Activated naive CD4-positive, alpha-beta T cell treated with anti-CD3 and anti-CD28 coated beads for 36 hours (primary cell): ENCODE measurements at regions of chr4 and their contacts with region 1.

Region 1: DNA sequence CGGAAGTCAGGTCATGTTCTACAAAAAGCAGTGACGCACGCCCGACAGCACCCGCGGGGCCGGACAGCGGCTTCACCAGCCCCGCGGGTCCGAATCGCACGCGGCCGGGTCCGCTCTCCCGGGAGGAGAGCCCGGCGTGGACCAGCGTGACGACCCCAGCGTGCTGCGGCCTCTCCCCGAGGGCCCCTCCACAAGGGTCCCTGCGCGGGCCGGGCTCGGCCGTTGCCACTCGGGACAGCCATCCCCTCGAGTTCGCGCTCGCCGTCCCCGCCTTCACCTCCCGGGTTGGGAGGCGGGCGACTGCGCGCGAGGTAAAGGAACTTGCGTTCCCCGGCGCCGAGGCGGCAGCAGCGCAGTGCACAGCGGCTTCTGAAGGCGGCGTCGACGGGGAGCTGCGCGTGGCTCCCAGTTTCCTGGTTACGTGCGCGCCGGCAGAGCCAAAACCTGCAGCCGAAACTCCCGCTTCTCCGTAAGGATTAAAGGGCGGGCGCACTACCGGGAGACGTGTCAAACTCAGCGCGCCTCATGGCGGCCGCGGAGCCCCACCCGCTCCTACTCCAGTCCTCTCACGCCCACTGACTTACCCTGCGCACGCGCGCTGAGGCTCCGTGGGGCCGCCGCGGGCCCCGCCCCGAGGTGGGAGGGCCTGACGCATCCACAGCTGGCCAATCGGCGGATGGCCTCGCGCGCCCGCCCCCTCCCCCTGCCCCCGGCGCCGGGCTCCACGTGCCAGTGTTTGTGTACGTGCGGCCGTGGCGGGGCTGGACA is 416 bp upstream of the LRP2BP start:
- DNase-seq: peak; percentile 95
- H3K4me3 Mint-ChIP-seq: peak overlapping the region; percentile 93
- H3K27ac Mint-ChIP-seq: peak overlapping the region; percentile 98
- H3K4me1 Mint-ChIP-seq: peaks cover 42% of the 10 kb centered on the region
- H3K27me3 Mint-ChIP-seq: no peaks in the 10 kb centered on the region

Region 2: GRCh38 chr4:183504064-183504929 is 1891.8 kb before region 1 on chr4:
- CTCF ChIA-PET with region 1: no interaction called
- intact Hi-C with region 1: loop called (anchors 10 kb)
- DNase-seq: peak; percentile 98
- H3K4me3 Mint-ChIP-seq: peak overlapping the region; percentile 91
- H3K27ac Mint-ChIP-seq: peak overlapping the region; percentile 93
- H3K4me1 Mint-ChIP-seq: peaks cover 39% of the 10 kb centered on the region
- H3K27me3 Mint-ChIP-seq: no peaks in the 10 kb centered on the region

Region 3: DNA sequence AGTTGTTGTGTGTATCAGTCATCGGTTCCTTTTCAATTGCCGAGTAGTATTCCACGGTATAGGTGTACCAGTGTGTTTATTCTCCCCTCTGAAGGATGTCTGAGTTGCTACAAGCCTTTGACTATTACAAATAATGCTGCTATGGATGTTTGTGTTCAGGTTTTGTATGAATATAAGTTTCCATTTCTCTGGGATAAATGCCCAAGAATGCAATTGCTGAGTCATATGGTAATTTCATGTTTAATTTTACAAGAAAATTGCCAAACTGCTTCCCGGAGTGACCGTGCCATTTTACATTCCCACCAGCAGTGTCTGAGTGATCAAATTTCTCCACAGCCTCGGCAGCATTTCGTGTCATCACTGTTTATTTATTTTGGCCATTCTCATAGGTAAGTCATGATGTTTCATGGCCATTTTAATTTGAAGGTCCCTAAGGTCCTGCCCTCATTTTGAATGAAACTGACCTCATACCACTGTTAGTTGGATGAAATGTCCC is 995.7 kb before region 1 on chr4:
- CTCF ChIA-PET with region 1: no interaction called
- intact Hi-C with region 1: no loop called
- DNase-seq: no peak
- H3K4me3 Mint-ChIP-seq: no peak overlapping the region
- H3K27ac Mint-ChIP-seq: no peak overlapping the region
- H3K4me1 Mint-ChIP-seq: peaks cover 20% of the 10 kb centered on the region
- H3K27me3 Mint-ChIP-seq: no peaks in the 10 kb centered on the region

Region 4: GRCh38 chr4:184733654-184734524 is 662.3 kb before region 1 on chr4 and contains the start of gene CENPU:
- CTCF ChIA-PET with region 1: no interaction called
- intact Hi-C with region 1: loop called (anchors 2 kb)
- DNase-seq: peak; percentile 97
- H3K4me3 Mint-ChIP-seq: peak within 1 kb of the TSS; percentile 97
- H3K27ac Mint-ChIP-seq: peak within 1 kb of the TSS; percentile 86
- H3K4me1 Mint-ChIP-seq: peaks cover 19% of the 10 kb centered on the region
- H3K27me3 Mint-ChIP-seq: no peaks in the 10 kb centered on the region
- total RNA-seq, gene CENPU: 78.7 to 91.5 TPM

Region 5: DNA sequence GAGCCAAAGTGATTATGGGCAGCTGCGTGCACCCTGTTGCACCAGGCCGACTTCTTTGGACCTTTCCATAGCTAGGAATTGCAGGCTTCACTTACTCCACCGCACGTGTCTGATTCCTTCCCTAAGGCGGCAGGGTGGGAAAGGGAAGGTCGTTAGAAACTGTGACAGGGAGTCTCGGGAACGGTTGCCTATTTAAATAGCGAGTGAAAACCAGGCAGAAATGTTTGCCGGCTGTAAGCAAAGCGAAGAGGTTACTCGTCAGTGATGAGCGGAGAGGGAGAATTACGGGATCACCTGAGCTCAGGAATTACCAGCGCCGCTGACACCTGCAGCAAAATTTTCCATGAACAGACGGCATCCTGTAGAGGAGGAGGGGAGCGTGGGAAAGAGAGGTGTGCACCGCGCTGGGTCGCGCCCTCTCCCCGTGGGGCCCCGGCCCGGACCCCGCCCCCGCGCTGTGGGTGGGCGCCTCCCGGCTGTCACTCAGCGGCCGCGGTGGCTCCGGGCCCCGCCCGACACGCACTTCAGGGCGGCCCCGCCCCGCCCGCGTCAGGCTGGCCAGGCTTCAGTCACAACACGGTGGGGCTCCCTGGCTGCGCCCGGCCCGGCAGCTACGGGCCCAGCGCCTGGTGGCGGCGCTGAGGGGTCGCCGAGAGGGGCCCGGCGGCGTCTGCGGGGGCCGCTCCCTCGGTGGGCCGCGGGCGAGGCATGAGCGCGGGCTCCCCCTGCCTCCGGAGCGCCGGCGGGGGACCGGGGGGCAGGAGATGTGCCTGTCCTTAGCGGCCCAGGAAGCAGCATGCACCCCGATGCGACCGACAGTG is 186.9 kb before region 1 on chr4 and contains the start of gene SNX25:
- CTCF ChIA-PET with region 1: no interaction called
- intact Hi-C with region 1: loop called (anchors 1 kb)
- DNase-seq: peak; percentile 84
- H3K4me3 Mint-ChIP-seq: peak within 1 kb of the TSS; percentile 84
- H3K27ac Mint-ChIP-seq: peak within 1 kb of the TSS; percentile 71
- H3K4me1 Mint-ChIP-seq: peaks cover 28% of the 10 kb centered on the region
- H3K27me3 Mint-ChIP-seq: no peaks in the 10 kb centered on the region
- total RNA-seq, gene SNX25: 11.0 to 14.6 TPM

Region 6: GRCh38 chr4:185344743-185345538 is 51.2 kb before region 1 on chr4:
- CTCF ChIA-PET with region 1: no interaction called
- intact Hi-C with region 1: loop called (anchors 1 kb)
- DNase-seq: no peak
- H3K4me3 Mint-ChIP-seq: peak overlapping the region; percentile 30
- H3K27ac Mint-ChIP-seq: peak overlapping the region; percentile 61
- H3K4me1 Mint-ChIP-seq: peaks cover 30% of the 10 kb centered on the region
- H3K27me3 Mint-ChIP-seq: no peaks in the 10 kb centered on the region

Region 7: GRCh38 chr4:185464184-185464583 is 68.0 kb after region 1 on chr4:
- CTCF ChIA-PET with region 1: no interaction called
- intact Hi-C with region 1: no loop called
- DNase-seq: no peak
- H3K4me3 Mint-ChIP-seq: no peak overlapping the region
- H3K27ac Mint-ChIP-seq: no peak overlapping the region
- H3K4me1 Mint-ChIP-seq: no peaks in the 10 kb centered on the region
- H3K27me3 Mint-ChIP-seq: peaks cover 5% of the 10 kb centered on the region

Region 8: GRCh38 chr4:185587427-185588161 is 191.5 kb after region 1 on chr4:
- CTCF ChIA-PET with region 1: no interaction called
- intact Hi-C with region 1: loop called (anchors 1 kb)
- DNase-seq: peak; percentile 91
- H3K4me3 Mint-ChIP-seq: peak overlapping the region; percentile 63
- H3K27ac Mint-ChIP-seq: peak overlapping the region; percentile 48
- H3K4me1 Mint-ChIP-seq: peaks cover 16% of the 10 kb centered on the region
- H3K27me3 Mint-ChIP-seq: peaks cover 43% of the 10 kb centered on the region